ENCODE measurements at regions of chr6 and their contacts with region 1.

Region 1: GRCh38 chr6:37169496-37170272 is at the start of gene PIM1:
- DNase-seq: peak; percentile 92
- H3K4me3 Mint-ChIP-seq: peak within 1 kb of the TSS; percentile 93
- H3K27ac Mint-ChIP-seq: peak within 1 kb of the TSS; percentile 98
- H3K4me1 Mint-ChIP-seq: peaks cover 42% of the 10 kb centered on the region
- H3K27me3 Mint-ChIP-seq: peaks cover 2% of the 10 kb centered on the region
- total RNA-seq, gene PIM1: 182 and 192 TPM in 2 replicates

Region 2: DNA sequence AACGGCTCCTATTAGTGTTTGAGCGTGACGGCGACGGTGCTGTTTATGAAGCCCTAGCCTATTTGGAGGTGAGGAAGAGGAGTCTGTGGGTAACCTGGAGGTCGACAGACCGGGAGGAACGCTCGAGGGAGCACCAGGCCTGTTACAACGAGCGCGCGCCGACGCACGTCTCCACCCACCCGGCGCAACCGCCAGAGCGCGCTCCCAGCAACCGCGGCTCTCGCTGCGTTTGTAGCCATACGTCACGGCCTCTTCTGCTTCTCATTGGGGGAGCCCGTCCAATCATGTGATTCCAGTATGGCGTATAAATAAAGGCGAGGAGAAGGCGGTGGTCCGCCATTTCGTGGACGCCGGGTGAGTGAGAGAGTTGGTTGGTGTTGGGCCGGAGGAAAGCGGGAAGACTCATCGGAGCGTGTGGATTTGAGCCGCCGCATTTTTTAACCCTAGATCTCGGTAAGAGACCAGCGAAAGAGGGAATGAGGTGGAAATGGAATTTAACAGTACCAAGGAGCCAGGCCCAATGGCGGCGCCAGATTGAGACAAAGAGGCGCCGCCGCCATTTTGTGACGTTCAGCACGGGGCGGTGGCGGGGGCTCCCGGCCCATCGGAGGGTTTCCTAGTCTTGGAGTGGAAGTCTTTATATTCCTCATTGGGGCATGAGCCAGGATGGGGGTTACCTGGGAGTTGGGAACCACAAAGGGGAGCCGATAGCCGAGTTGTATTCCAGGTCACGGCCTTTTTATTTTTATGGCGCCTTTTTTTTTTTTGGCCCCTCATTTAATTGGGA is 575.5 kb before region 1 on chr6 and contains the start of gene SRSF3:
- intact Hi-C with region 1: loop called (anchors 10 kb)
- DNase-seq: peak; percentile 96
- H3K4me3 Mint-ChIP-seq: peak within 1 kb of the TSS; percentile 97
- H3K27ac Mint-ChIP-seq: peak within 1 kb of the TSS; percentile 100
- H3K4me1 Mint-ChIP-seq: peaks cover 44% of the 10 kb centered on the region
- H3K27me3 Mint-ChIP-seq: no peaks in the 10 kb centered on the region
- total RNA-seq, gene SRSF3: 525 and 546 TPM in 2 replicates

Region 3: GRCh38 chr6:36912586-36912985 is 257.1 kb before region 1 on chr6:
- intact Hi-C with region 1: loop called (anchors 1 kb)
- DNase-seq: peak; percentile 72
- H3K4me3 Mint-ChIP-seq: peak overlapping the region; percentile 79
- H3K27ac Mint-ChIP-seq: peak overlapping the region; percentile 94
- H3K4me1 Mint-ChIP-seq: peaks cover 57% of the 10 kb centered on the region
- H3K27me3 Mint-ChIP-seq: no peaks in the 10 kb centered on the region

Region 4: GRCh38 chr6:37051138-37052026 is 118.3 kb before region 1 on chr6:
- intact Hi-C with region 1: loop called (anchors 1 kb)
- DNase-seq: peak; percentile 82
- H3K4me3 Mint-ChIP-seq: peak overlapping the region; percentile 92
- H3K27ac Mint-ChIP-seq: peak overlapping the region; percentile 99
- H3K4me1 Mint-ChIP-seq: peaks cover 70% of the 10 kb centered on the region
- H3K27me3 Mint-ChIP-seq: no peaks in the 10 kb centered on the region

Region 5: GRCh38 chr6:37137201-37138090 is 32.2 kb before region 1 on chr6:
- intact Hi-C with region 1: loop called (anchors 1 kb)
- DNase-seq: peak; percentile 6
- H3K4me3 Mint-ChIP-seq: peak overlapping the region; percentile 47
- H3K27ac Mint-ChIP-seq: peak overlapping the region; percentile 95
- H3K4me1 Mint-ChIP-seq: peaks cover 51% of the 10 kb centered on the region
- H3K27me3 Mint-ChIP-seq: no peaks in the 10 kb centered on the region

Region 6: DNA sequence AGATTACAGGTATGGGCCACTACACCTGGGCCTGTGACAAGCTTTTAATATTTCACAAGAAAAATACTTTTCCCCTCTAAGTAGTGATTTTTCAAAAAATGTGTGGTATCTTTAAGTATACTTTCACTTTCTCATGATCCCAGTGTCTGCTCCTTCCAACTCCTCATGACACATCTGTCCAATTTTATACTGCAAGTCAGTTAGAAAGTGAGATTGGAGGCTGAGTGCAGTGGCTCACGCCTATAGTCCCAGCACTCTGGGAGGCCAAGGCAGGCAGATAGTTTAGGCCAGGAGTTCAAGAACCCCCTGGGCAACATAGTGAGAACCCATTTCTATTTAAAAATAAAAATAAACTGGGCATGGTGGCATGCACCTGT is 20.5 kb after region 1 on chr6:
- intact Hi-C with region 1: loop called (anchors 1 kb)
- DNase-seq: no peak
- H3K4me3 Mint-ChIP-seq: no peak overlapping the region
- H3K27ac Mint-ChIP-seq: peak overlapping the region; percentile 74
- H3K4me1 Mint-ChIP-seq: peaks cover 71% of the 10 kb centered on the region
- H3K27me3 Mint-ChIP-seq: no peaks in the 10 kb centered on the region

Region 7: GRCh38 chr6:37257634-37258404 is 88.1 kb after region 1 on chr6 and contains the starts of genes TBC1D22B and TMEM217:
- intact Hi-C with region 1: loop called (anchors 1 kb)
- DNase-seq: peak; percentile 95
- H3K4me3 Mint-ChIP-seq: peak within 1 kb of the TSS; percentile 97
- H3K27ac Mint-ChIP-seq: peak within 1 kb of the TSS; percentile 100
- H3K4me1 Mint-ChIP-seq: peaks cover 78% of the 10 kb centered on the region
- H3K27me3 Mint-ChIP-seq: no peaks in the 10 kb centered on the region
- total RNA-seq, gene TBC1D22B: 20.8 and 21.2 TPM in 2 replicates
- total RNA-seq, gene TMEM217: 7.7 and 9.9 TPM in 2 replicates